Activated CD4-positive, alpha-beta memory T cell treated with anti-CD3 and anti-CD28 coated beads for 36 hours (primary cell): ENCODE measurements at regions of chr7 and their contacts with region 1.

Region 1: DNA sequence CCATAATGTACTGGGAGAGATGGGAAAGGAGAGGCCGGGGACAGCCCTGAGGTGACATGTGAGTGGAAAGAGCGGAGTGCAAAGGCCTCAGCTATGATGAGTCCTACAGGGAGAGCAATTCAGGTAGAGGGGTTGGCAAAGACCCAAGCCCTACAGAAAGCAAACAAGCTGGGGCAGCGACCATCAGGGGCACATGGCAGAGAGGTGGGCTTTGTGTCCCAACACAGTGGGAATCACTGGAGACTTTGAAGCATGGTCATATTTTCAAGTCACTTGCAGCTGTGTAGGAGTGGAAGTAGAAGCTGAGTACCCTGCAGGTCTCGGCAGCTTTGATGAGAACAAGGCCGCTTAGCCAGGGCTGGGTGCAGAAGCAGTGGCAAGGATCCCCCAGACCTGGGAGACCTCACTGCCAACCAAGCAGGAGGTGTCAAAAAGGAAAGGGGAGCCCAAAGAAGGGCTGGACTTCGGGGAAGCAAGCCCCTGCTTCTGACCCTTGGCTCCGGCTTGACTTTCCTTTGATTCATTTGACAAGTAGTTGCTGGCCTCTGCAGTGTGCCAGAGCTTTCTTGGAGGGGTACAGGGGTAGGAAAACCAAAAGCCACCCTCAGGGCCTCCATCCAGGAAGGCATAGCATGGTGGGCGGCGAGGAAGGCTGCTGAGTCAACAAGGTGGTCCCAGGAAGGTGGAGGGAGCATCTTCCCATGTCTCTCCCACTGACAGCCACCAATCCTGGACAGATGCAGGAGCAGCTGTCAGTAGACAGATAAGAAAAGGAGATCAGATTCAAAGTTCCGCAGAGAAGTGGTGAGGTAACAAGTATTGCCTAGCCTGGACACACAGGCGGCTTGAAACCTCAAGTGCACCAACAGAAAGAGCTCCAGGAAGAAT is 1.9 kb upstream of the PGAM2 start:
- DNase-seq: no peak
- H3K4me3 Mint-ChIP-seq: no peak overlapping the region
- H3K27ac Mint-ChIP-seq: no peak overlapping the region
- H3K4me1 Mint-ChIP-seq: peaks cover 35% of the 10 kb centered on the region
- H3K27me3 Mint-ChIP-seq: no peaks in the 10 kb centered on the region

Region 2: GRCh38 chr7:43834463-43835251 is 232.7 kb before region 1 on chr7:
- CTCF ChIA-PET with region 1: no interaction called
- POLR2A ChIA-PET with region 1: no interaction called
- intact Hi-C with region 1: no loop called
- DNase-seq: peak; percentile 64
- H3K4me3 Mint-ChIP-seq: peak overlapping the region; percentile 77
- H3K27ac Mint-ChIP-seq: peak overlapping the region; percentile 65
- H3K4me1 Mint-ChIP-seq: peaks cover 31% of the 10 kb centered on the region
- H3K27me3 Mint-ChIP-seq: no peaks in the 10 kb centered on the region

Region 3: GRCh38 chr7:44044315-44045225 is 22.7 kb before region 1 on chr7 and contains the start of gene DBNL:
- CTCF ChIA-PET with region 1: interaction called, 4 read pairs
- POLR2A ChIA-PET with region 1: interaction called, 9 read pairs
- intact Hi-C with region 1: loop called (anchors 2 kb)
- DNase-seq: peak; percentile 95
- H3K4me3 Mint-ChIP-seq: peak within 1 kb of the TSS; percentile 90
- H3K27ac Mint-ChIP-seq: peak within 1 kb of the TSS; percentile 88
- H3K4me1 Mint-ChIP-seq: peaks cover 45% of the 10 kb centered on the region
- H3K27me3 Mint-ChIP-seq: no peaks in the 10 kb centered on the region
- total RNA-seq, gene DBNL: 128 to 129 TPM

Region 4: DNA sequence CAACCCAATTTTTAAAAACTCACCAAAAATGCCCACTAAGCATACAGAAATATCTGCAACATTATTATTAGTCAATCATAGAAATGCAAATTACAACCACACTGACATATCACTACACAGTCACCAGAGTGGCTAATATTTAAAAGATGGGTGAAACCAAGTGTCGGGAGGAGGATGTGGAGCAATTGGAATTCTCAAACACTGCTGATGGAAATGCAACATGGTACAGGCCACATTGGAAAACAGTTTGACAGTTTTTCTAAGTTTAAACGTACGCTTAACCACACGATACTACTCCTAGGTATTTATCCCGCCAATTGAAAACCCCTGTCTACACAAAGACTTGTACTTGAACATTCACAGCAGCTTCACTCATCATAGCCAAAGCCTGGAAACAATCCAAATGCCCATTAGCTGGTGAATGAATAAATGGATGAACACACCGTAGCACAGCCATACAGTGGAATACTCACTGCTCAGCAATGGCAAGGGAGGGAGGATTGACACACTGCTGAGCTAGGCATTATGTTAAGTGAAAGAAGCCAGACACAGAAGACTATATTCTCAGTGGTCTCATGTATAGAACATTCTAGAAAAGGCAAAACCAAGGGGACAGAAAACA is 105.6 kb after region 1 on chr7:
- CTCF ChIA-PET with region 1: no interaction called
- POLR2A ChIA-PET with region 1: no interaction called
- intact Hi-C with region 1: no loop called
- DNase-seq: no peak
- H3K4me3 Mint-ChIP-seq: no peak overlapping the region
- H3K27ac Mint-ChIP-seq: no peak overlapping the region
- H3K4me1 Mint-ChIP-seq: peaks cover under 1% of the 10 kb centered on the region
- H3K27me3 Mint-ChIP-seq: peaks cover 16% of the 10 kb centered on the region